Sigmoid colon (tissue), 7 donors: ENCODE measurements at regions of chr2 and their contacts with region 1.

Region 1: GRCh38 chr2:216034065-216034464 is 20.7 kb upstream of the MREG start:
- DNase-seq: no peak
- H3K4me3 ChIP-seq: no peak overlapping the region
- H3K27ac ChIP-seq: no peak overlapping the region
- H3K4me1 ChIP-seq: no peaks in the 10 kb centered on the region
- H3K27me3 ChIP-seq: no peaks in the 10 kb centered on the region
- CTCF ChIP-seq: peak; percentile 31 to 84 (median 58)
- EP300 ChIP-seq: no peak
- POLR2A ChIP-seq: no peak

Region 2: DNA sequence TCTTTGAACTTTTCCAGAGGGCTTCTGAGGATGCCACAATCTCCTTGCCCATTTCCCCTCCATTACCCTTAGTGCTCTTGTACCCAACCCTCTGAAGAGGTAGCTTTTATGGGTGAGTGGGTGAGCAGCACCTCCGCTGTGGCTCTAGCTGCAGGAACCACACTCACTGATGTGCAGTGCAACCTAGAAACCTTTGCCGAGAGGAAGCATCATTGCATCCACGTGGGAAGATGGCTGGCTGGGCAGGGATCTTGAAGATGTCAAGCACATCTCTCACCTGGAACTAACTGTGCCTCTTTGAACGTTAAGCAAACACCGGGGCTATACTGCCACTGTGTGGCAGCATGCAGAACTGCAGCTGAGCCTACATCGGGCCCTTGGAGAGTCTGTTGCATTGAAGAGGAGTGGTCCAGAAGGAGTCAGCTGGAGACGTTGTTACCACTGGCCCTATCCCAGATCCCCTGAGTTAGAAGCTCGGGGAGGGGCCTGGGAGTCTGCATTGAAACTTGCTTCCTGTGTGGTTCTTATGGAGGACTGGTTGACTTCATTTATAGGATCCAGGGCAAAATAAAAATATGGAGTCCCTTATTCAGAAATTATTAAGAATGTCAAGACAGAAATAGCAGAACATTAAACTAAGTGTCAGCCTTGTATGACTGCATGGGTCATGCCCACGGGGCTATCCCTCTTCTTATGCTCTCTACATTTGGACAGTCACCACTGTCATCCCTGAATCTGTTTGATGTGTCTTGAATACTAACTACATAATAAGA is 632.6 kb after region 1 on chr2:
- intact Hi-C with region 1: loop called (anchors 10 kb)
- DNase-seq: no peak
- H3K4me3 ChIP-seq: no peak overlapping the region
- H3K27ac ChIP-seq: peak overlapping the region in 1 of 4 donors; percentile 66
- H3K4me1 ChIP-seq: peaks cover 0 to 17% (median 15%) of the 10 kb centered on the region in 4 donors
- H3K27me3 ChIP-seq: no peaks in the 10 kb centered on the region
- CTCF ChIP-seq: peak; percentile 94 to 99 (median 98)
- EP300 ChIP-seq: no peak
- POLR2A ChIP-seq: no peak